ENCODE measurements at regions of chr19 and their contacts with region 1.

Region 1: DNA sequence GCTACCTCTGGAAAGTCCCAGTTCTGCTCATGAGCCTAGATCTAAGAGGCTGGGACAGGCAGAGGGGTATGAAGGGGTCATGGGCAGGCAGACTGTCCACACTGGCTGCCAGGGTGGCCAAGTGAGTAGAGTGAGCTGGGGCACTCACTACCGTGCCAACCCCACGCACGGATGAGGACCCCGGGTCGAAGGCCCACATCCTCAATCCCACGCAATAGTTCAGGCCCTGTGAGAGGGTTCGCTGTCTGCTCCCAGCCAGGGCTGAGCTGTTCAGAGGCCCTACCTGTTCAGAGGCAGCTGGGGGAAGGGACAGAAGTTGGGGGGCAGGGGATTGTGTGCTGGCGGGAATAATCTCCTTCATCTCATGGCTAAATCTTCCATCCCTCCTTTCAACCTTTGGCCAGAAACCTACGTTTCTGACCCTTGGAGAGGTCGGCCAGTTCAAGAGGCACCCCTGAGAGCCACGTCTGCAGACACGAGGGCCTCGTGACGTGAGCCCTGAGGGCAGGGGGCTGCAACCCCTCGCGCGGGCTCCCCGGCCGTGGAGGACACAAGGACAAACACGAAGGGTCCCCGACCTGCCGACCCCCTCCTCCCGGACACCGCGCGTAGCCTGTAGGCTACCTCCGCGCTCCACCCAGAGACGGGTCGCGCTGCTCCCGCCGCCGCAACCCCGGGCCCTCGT is 1.0 kb upstream of the RPS5 start:
- DNase-seq: peak in 1 of 2 donors; percentile 44
- ATAC-seq: peak in 3 of 4 donors; percentile 6 to 31 (median 11)
- H3K4me3 ChIP-seq: peak overlapping the region; percentile 91
- H3K27ac ChIP-seq: peak overlapping the region; percentile 96
- H3K4me1 ChIP-seq: peaks cover 36% of the 10 kb centered on the region
- H3K27me3 ChIP-seq: no peaks in the 10 kb centered on the region
- CTCF ChIP-seq: no peak

Region 2: DNA sequence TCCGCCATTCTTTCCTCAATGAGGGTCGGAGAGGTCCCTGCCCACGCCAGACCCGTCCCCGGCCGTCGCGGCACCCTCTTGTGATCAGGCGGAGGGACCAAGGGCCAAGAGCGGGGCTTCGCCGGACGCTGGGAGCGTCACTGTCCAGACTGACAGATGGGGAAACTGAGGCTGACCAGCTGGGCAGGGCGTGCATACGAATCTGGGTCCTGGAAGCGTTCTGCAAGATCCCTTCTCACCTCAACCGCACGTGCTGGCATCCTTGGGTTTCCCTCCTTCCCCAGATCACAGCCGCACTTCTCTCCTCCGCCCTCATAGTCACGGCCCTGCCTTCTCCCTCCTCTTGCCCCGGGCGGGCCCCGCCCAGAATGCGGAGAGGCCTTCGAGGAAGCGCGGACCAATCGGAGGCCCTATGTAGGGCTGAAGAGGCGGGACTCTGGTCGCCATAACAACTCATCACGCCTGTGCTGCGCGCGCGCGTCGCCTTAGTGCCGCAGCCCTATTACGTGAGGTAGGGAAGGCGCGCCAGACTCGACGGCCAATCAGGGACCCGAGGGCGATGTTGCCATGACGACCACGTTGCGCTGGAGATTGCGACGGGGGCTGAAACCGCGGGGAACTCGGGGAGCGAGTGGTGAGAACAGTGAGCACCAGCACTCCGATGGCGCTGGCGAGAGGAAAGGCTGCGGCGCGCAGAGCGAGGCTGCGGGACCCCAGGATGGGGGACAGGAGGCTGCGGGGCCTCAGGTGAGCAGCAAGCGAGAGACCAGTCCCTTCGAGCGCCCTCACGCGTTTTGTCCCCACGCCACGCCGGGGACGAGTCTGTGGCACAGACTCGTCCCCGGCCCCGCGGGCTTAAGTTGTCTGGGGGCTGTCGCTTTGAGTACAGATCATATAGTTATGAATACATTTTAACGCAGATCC is 15.1 kb after region 1 on chr19:
- intact Hi-C with region 1: loop called in 1 of 2 experiments (anchors 2 kb)
- DNase-seq: peak; percentile 99 to 100
- ATAC-seq: peak; percentile 99 to 100 (median 100)
- H3K4me3 ChIP-seq: peak overlapping the region; percentile 69
- H3K27ac ChIP-seq: peak overlapping the region; percentile 53
- H3K4me1 ChIP-seq: peaks cover 8% of the 10 kb centered on the region
- H3K27me3 ChIP-seq: peaks cover 0 to 13% (median 8%) of the 10 kb centered on the region in 3 donors
- CTCF ChIP-seq: no peak

Measured in psoas muscle (tissue), 8 donors.